ENCODE measurements at regions of chr20 and their contacts with region 1.

Region 1: GRCh38 chr20:31859998-31860709 is 10.2 kb downstream of the DUSP15 start:
- DNase-seq: peak; percentile 53 to 80 (median 67)
- H3K4me3 ChIP-seq: peak overlapping the region in 1 of 4 donors; percentile 83
- H3K27ac ChIP-seq: peak overlapping the region in 1 of 5 donors; percentile 34
- H3K4me1 ChIP-seq: peaks cover 14 to 20% of the 10 kb centered on the region in 2 donors
- H3K27me3 ChIP-seq: no peaks in the 10 kb centered on the region
- CTCF ChIP-seq: no peak
- POLR2A ChIP-seq: peak in 1 of 2 donors; percentile 54

Region 2: GRCh38 chr20:31781945-31782344 is 78.2 kb before region 1 on chr20:
- intact Hi-C with region 1: no loop called
- DNase-seq: no peak
- H3K4me3 ChIP-seq: no peak overlapping the region
- H3K27ac ChIP-seq: no peak overlapping the region
- H3K4me1 ChIP-seq: no peaks in the 10 kb centered on the region
- H3K27me3 ChIP-seq: no peaks in the 10 kb centered on the region
- CTCF ChIP-seq: no peak
- POLR2A ChIP-seq: no peak

Region 3: DNA sequence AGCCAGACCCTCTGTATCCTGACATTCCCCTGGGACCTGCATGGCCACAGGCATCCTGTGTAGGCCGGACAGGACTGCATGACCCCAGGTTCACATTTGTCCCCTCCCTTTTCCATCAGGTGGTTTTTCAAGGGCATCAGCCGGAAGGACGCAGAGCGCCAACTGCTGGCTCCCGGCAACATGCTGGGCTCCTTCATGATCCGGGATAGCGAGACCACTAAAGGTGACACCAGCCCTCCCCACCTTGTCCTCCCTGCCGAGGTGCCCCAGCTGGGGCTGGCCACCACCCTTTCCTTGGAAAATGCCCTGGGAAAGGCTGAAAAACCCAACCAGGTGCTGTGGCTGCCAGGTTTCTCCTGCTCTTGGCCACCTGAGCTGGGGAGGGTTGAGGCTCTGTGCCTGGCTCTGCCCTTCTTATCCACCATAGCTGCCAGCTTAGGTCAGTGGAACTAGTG is 219.5 kb after region 1 on chr20:
- intact Hi-C with region 1: loop called in 1 of 2 experiments (anchors 10 kb)
- DNase-seq: no peak
- H3K4me3 ChIP-seq: no peak overlapping the region
- H3K27ac ChIP-seq: no peak overlapping the region
- H3K4me1 ChIP-seq: no peaks in the 10 kb centered on the region
- H3K27me3 ChIP-seq: no peaks in the 10 kb centered on the region
- CTCF ChIP-seq: no peak
- POLR2A ChIP-seq: no peak

Region 4: GRCh38 chr20:32652739-32653526 is 792.8 kb after region 1 on chr20:
- intact Hi-C with region 1: loop called in 1 of 2 experiments (anchors 10 kb)
- DNase-seq: peak; percentile 88 to 95 (median 93)
- H3K4me3 ChIP-seq: no peak overlapping the region
- H3K27ac ChIP-seq: peak overlapping the region in 1 of 5 donors; percentile 32
- H3K4me1 ChIP-seq: no peaks in the 10 kb centered on the region
- H3K27me3 ChIP-seq: no peaks in the 10 kb centered on the region
- CTCF ChIP-seq: peak; percentile 95 to 99 (median 98)
- POLR2A ChIP-seq: peak in 1 of 2 donors; percentile 4